ENCODE measurements at regions of chr10 and their contacts with region 1.

Region 1: DNA sequence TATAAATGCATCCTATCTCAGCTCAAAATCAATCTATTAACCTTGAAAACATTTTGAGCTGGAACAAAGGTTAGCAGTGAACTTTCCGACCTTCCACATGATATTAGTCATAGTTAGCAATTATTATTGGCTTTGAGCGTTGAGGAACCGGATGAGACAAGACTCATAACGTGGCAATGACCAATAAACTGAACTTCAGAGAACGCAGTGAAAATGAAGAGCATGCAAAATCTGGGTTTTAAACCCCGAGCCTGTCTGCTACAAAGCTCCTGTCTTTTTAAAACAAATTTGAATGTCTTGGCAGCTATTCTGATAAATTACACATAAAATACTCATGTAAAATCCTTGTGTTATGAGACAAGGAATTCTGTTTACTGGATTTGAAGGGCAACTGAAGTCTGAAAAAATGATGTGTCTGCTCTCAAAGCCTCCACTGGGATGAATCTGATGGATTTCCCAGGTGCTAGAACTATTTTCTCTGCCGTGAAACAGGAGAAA is 74.7 kb upstream of the ITGB1 start:
- DNase-seq: peak; percentile 100
- ATAC-seq: peak; percentile 90
- H3K4me3 ChIP-seq: peak overlapping the region; percentile 41
- H3K27ac ChIP-seq: peak overlapping the region; percentile 75
- H3K4me1 ChIP-seq: peaks cover 20% of the 10 kb centered on the region
- H3K27me3 ChIP-seq: no peaks in the 10 kb centered on the region
- CTCF ChIP-seq: no peak

Region 2: DNA sequence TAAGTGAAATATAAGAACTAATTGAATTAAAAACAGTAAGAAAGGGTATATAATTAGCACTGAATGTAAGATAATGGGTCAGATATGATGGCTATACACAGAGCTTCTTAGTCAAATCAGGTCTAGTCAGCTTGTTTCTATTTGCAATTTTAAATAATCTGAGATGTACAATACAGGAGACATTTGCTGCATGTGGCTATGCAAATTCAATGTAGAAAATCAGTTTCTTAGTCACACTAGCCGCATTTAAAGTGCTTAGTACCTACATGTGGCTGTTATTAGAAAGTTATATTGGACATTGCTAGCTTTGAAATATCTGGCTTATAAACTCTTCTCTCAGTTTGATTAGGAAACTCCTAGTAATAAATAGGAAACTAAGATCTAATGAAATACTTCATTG is 561.5 kb before region 1 on chr10:
- CTCF ChIA-PET with region 1: no interaction called
- POLR2A ChIA-PET with region 1: interaction called, 13 read pairs
- intact Hi-C with region 1: no loop called
- DNase-seq: no peak
- ATAC-seq: no peak
- H3K4me3 ChIP-seq: no peak overlapping the region
- H3K27ac ChIP-seq: no peak overlapping the region
- H3K4me1 ChIP-seq: no peaks in the 10 kb centered on the region
- H3K27me3 ChIP-seq: no peaks in the 10 kb centered on the region
- CTCF ChIP-seq: no peak

Region 3: GRCh38 chr10:33047655-33048054 is 15.0 kb after region 1 on chr10:
- CTCF ChIA-PET with region 1: no interaction called
- POLR2A ChIA-PET with region 1: no interaction called
- intact Hi-C with region 1: no loop called
- DNase-seq: peak; percentile 23
- ATAC-seq: peak; percentile 54
- H3K4me3 ChIP-seq: no peak overlapping the region
- H3K27ac ChIP-seq: no peak overlapping the region
- H3K4me1 ChIP-seq: peaks cover 4% of the 10 kb centered on the region
- H3K27me3 ChIP-seq: no peaks in the 10 kb centered on the region
- CTCF ChIP-seq: 0 out of 2 replicates have a peak, but pooled peaks have one; percentile 15

Region 4: DNA sequence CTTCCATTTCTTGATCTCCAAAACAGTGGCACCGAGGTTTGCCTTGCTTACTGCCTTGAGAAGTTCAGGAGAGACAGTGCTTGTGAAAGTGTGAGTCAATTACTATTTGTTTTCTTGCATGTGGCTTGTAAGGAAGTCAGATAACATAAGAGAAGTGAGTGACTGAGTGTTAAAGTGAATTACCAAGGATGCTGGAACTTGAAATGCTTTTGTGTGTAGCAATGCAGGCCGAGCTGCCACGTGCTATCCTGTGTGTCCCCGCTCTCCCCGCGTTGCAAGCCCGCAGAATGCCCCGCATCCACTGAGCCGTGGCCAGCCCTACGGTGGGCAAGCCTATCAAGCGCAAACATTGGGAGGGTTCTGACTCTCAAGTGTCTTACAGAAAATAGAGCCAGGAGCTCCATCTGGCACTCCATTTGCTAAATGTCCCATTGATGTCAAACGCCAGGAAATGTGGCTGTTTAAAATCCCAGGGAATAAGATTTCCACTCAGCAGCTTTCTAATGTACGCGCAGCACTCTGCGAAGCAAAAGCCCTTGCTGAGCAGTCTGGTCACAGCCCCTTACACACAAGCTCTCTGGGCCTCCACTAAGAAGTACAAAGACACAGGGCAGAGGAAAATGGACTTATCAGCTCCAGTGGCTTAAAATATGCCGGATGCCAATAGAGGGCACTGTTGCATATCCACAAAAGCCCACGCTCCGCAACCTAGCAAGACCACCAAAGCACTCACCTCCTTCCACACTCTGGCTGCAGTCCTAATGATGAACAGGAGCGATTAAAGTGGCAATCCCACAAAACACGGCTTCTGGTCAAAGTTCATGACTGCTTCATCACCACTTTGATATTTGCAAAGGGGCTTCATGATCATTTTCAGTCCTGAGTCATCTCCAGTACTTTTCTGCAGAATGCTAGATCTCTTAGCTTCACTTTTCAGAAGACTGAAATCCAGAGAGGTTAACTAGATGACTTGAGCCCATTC is 83.3 kb after region 1 on chr10:
- CTCF ChIA-PET with region 1: interaction called, 7 read pairs
- POLR2A ChIA-PET with region 1: no interaction called
- intact Hi-C with region 1: loop called (anchors 5 kb)
- DNase-seq: peak; percentile 85
- ATAC-seq: peak; percentile 84
- H3K4me3 ChIP-seq: no peak overlapping the region
- H3K27ac ChIP-seq: peak overlapping the region; percentile 59
- H3K4me1 ChIP-seq: peaks cover 39% of the 10 kb centered on the region
- H3K27me3 ChIP-seq: no peaks in the 10 kb centered on the region
- CTCF ChIP-seq: peak; percentile 95

Region 5: DNA sequence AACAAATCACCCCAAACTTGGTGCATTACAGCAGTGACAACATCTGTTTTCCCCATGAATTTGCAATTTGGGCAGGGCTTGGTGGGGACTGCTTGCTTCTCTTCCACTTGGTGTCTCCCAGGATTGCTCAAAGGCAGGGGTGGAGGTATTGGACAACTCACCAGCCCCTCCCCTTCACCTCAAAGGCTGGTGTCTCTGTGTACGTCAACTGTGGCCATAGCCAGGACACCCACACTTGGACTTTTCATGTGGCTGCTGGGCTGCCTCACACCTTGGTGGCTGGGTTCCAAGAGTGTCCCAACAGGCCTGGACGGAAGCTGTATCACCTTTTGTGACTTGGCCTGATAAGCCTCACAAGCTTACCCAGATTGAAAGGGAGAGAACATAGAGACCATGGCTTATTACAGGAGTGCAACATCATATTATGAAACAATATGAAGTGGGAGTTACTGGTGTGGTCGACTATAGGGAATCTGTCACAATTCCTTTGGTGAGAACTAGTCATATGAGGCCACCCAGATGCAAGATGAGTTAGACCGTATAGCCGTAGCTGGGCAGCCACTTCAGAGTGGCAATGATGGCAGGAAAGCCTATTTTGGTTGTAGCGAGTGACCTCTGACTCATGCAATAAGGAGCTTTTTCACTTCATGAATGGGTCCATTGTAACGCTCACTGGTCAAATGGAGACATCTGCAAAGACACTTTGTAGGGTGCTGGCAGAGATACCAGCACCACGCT is 112.9 kb after region 1 on chr10:
- CTCF ChIA-PET with region 1: no interaction called
- POLR2A ChIA-PET with region 1: no interaction called
- intact Hi-C with region 1: no loop called
- DNase-seq: no peak
- ATAC-seq: no peak
- H3K4me3 ChIP-seq: no peak overlapping the region
- H3K27ac ChIP-seq: no peak overlapping the region
- H3K4me1 ChIP-seq: peaks cover 17% of the 10 kb centered on the region
- H3K27me3 ChIP-seq: no peaks in the 10 kb centered on the region
- CTCF ChIP-seq: no peak